ENCODE measurements at regions of chr17 and their contacts with region 1.

Region 1: DNA sequence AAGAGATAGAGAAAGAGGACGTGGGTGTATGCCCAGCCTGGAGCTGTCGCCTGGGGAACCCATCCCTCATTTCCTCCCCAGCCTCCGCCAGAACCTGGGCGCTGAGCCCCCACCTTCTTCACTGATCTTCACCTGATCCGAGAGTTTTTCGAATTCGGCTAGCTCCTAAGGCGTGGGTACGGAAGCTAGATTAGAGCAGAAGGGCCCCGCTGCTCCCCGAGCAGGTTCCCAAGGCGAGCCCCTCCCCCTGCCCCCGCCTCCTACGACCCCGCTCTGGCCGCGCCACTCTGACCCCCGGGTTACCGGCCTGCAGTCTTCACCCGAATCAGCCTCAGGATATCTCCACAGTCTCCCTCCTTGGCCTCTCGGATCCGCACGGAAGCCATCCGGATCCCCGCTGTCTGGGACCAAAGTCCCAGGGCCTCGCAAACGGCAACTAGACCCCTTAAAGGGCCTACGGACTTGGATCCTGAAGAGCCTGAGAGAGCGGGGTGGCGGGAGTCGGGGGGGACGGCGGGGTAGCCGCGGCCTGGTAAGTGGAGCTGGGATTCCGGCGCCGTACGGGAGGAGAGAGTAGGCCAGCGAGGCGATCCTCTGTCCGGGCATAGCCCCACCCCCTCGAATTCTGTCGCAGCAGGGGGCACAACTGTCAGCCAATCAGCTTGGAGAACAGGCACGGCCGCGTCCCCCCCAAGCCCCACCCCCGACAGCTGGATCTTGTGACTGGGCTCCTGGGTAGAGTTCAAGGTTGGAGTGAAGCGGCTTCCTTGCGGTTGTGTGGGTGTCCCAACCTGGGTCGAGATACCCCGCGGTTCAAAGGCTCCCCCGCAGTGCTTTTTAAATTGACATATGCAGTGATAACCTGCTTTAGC is at the start of gene SAT2:
- DNase-seq: peak; percentile 87 to 100
- H3K4me3 ChIP-seq: peak within 1 kb of the TSS; percentile 72 to 98 (median 76)
- H3K27ac ChIP-seq: peak within 1 kb of the TSS; percentile 16; the same call in 1 of the 2 replicates
- H3K4me1 ChIP-seq: peaks cover 2 to 10% (median 4%) of the 10 kb centered on the region in 4 experiments; a peak in 5 of 7 replicates
- H3K27me3 ChIP-seq: no peaks in the 10 kb centered on the region
- CTCF ChIP-seq: no peak
- EP300 ChIP-seq: peak in 1 of 2 experiments; percentile 77; a peak in 1 of 3 replicates
- POLR2A ChIP-seq: peak in 1 of 2 experiments; percentile 75; a peak in 2 of 3 replicates
- RAD21 ChIP-seq: no peak
- total RNA-seq, gene SAT2: 72.3 and 75.3 TPM in 2 replicates

Region 2: GRCh38 chr17:7572588-7573323 is 54.7 kb before region 1 on chr17:
- CTCF ChIA-PET with region 1: interaction called, 4 read pairs
- POLR2A ChIA-PET with region 1: interaction called, 10 read pairs
- DNase-seq: peak; percentile 100
- H3K4me3 ChIP-seq: peak overlapping the region; percentile 97 to 99 (median 98)
- H3K27ac ChIP-seq: peak overlapping the region; percentile 99
- H3K4me1 ChIP-seq: peaks cover 4 to 10% (median 7%) of the 10 kb centered on the region in 4 experiments
- H3K27me3 ChIP-seq: no peaks in the 10 kb centered on the region
- CTCF ChIP-seq: no peak
- EP300 ChIP-seq: no peak
- POLR2A ChIP-seq: peak; percentile 96 to 98
- RAD21 ChIP-seq: no peak

Region 3: DNA sequence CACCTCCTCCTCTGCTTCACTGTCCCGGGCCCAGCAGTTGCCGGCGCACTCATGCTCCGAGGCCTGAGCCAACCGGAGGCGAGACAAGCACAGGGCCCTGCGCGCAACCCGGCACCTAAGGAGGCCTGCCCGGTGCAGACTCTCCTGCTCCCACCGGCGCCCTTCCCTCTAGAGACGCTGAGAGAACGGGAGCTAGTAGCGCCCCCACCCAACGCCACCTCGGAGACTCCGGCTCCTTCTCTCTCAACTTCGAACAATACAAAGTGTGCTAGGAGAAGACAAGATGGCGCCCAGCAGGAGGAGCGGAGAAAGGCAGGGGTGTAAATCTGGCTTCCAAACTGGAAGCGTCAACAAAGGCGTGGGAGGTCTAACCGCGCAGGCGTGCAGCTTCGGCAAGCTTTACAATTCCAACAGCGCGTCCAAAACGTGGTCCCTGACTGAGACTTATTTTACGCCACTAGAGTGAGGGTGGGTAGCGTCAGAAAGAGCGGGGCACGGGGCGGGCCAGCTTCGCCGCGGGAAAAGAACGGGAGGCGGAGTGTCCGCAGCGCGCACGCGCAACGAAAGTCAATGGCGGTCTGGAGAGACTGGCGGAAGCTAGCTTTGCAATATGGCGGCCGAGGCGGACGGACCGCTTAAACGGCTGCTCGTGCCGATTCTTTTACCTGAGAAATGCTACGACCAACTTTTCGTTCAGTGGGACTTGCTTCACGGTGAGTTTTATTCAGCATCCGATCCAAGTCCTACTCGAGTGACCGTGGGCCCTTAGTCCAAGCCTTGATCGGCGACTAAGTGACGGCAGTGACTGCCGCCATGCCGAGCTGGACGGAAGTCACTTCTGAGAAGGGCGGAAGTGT is 44.0 kb before region 1 on chr17 and contains the start of gene MPDU1:
- CTCF ChIA-PET with region 1: interaction called, 9 read pairs
- POLR2A ChIA-PET with region 1: interaction called, 33 read pairs
- DNase-seq: peak in 1 of 2 experiments; percentile 95
- H3K4me3 ChIP-seq: peak within 1 kb of the TSS; percentile 47 to 95 (median 70)
- H3K27ac ChIP-seq: peak within 1 kb of the TSS; percentile 98
- H3K4me1 ChIP-seq: peaks cover 0 to 19% (median 4%) of the 10 kb centered on the region in 4 experiments; a peak in 6 of 7 replicates
- H3K27me3 ChIP-seq: no peaks in the 10 kb centered on the region
- CTCF ChIP-seq: no peak
- EP300 ChIP-seq: no peak
- POLR2A ChIP-seq: peak; percentile 75 to 94
- RAD21 ChIP-seq: no peak
- total RNA-seq, gene MPDU1: 63.2 and 66.9 TPM in 2 replicates

Region 4: DNA sequence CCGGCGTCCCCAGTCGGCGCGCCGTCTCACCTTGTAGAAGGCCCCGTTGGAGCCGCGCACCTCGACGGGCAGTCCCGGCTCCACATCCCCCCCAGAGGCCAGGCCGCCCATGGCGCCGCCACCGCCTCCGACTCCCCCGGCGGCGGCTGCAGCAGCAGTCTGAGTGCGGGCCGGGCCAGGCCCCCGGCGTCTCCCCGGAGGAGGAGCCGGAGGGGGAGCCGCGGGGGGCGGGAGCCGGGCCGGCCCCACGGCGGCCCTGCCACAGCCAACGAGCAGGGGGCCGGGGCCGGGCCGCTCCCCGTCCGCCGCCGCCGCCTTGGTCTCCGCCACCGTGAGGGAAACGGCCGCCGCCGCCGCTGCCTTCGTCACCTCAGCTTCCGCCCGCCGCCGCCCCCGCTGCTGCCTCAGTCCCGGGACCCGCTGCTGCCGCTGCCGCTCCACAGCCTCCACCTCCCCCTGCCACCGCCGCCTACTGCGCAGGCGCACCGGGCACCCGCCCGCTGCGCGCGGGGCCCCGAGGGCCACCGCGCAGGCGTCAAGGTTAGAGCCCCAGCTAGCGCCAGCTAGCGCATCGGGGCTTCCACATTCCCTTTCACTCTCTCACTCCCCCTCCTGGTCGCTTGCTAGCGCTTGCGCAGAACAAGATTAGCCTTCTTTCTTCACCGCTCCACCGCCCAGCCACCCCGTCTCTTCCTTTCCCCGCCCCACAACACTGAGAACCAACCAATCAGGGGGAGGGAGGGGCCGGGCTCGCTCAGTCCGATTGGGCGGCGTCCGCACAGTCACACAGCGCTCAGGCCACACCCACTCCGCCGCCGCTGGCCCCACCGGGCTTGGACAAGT is 12.8 kb before region 1 on chr17 and contains the start of gene FXR2:
- CTCF ChIA-PET with region 1: interaction called, 92 read pairs
- POLR2A ChIA-PET with region 1: interaction called, 19 read pairs
- DNase-seq: peak; percentile 97 to 100
- H3K4me3 ChIP-seq: peak within 1 kb of the TSS; percentile 87 to 95 (median 92)
- H3K27ac ChIP-seq: peak within 1 kb of the TSS; percentile 52; the same call in 1 of the 2 replicates
- H3K4me1 ChIP-seq: peaks cover 0 to 5% (median 1%) of the 10 kb centered on the region in 4 experiments; a peak in 4 of 7 replicates
- H3K27me3 ChIP-seq: no peaks in the 10 kb centered on the region
- CTCF ChIP-seq: peak; percentile 62 to 76 (median 64)
- EP300 ChIP-seq: no peak
- POLR2A ChIP-seq: peak in 1 of 2 experiments; percentile 24; a peak in 1 of 3 replicates
- RAD21 ChIP-seq: peak; percentile 14 to 29
- total RNA-seq, gene FXR2: 26.2 and 26.8 TPM in 2 replicates

Region 5: GRCh38 chr17:7745748-7746470 is 118.4 kb after region 1 on chr17:
- CTCF ChIA-PET with region 1: no interaction called
- POLR2A ChIA-PET with region 1: no interaction called
- DNase-seq: no peak
- H3K4me3 ChIP-seq: no peak overlapping the region
- H3K27ac ChIP-seq: no peak overlapping the region
- H3K4me1 ChIP-seq: no peaks in the 10 kb centered on the region
- H3K27me3 ChIP-seq: no peaks in the 10 kb centered on the region; a peak in 1 of 7 replicates
- CTCF ChIP-seq: no peak
- EP300 ChIP-seq: no peak
- POLR2A ChIP-seq: no peak
- RAD21 ChIP-seq: no peak